Activated CD8-positive, alpha-beta T cell treated with anti-CD3 and anti-CD28 coated beads for 36 hours (primary cell): ENCODE measurements at regions of chr1 and their contacts with region 1.

Region 1: GRCh38 chr1:192808518-192809306 is at the start of gene RGS2:
- DNase-seq: peak; percentile 89
- ATAC-seq: peak; percentile 95
- H3K4me3 Mint-ChIP-seq: peak within 1 kb of the TSS; percentile 89
- H3K27ac Mint-ChIP-seq: peak within 1 kb of the TSS; percentile 93
- H3K4me1 Mint-ChIP-seq: peaks cover 29% of the 10 kb centered on the region
- H3K27me3 Mint-ChIP-seq: peaks cover 1% of the 10 kb centered on the region
- CTCF ChIP-seq: no peak
- total RNA-seq, gene RGS2: 5.7 to 6.3 TPM

Region 2: DNA sequence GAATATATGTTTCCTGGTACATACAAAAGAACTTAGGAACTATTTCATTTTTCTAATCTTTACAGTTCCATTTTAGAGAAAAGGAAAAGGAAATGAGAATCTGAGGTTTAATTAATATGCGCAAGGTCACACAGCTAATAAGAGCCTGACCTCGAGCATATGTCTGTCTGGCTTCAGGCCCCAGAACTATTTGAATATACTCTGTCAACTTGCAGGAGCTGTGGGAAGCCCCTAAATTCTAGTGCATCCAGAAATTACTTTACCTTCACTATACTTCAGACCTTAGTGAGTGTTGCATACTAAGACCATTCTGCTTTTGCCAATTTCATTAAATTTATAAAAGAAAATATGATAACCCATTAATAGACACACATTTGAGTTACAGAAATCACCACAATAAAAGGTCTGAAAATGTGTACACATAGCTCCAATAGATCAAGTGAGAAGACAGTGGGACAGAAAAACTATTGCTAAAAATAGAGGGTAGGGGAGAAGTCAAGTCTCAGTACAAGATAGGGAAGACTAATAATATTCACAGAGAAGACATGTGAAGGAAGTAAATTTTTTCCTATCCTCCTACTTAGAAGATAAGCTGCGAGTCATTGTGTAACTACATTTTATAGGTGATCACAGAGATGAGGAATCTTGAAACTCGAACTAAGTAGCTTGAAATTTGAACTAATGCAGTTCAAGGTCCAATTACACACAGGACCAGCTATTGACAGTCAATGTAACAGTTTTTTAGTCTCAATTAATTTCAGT is 168.9 kb before region 1 on chr1:
- CTCF ChIA-PET with region 1: no interaction called
- POLR2A ChIA-PET with region 1: no interaction called
- intact Hi-C with region 1: loop called (anchors 10 kb)
- DNase-seq: peak; percentile 4
- ATAC-seq: peak; percentile 85
- H3K4me3 Mint-ChIP-seq: no peak overlapping the region
- H3K27ac Mint-ChIP-seq: peak overlapping the region; percentile 61
- H3K4me1 Mint-ChIP-seq: peaks cover 8% of the 10 kb centered on the region
- H3K27me3 Mint-ChIP-seq: peaks cover 4% of the 10 kb centered on the region
- CTCF ChIP-seq: no peak

Region 3: DNA sequence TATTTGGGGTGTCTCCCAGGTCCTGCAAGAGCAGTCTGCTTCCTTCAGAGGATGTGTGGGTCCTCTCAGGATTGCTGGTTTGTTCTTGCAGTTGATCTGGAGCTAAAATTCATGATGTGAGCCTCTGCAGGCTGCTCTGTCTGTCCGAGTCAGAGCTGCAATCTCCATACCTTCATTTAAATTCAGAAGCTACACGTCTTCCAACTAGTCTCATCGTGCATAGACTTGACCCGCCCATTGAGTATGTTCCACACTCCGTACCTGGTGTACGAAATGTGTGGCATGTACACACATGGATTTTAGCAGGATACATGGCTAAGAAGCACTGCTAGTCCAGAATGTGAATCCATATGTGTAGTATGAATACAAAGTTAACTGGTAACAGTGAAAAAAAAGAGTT is 24.9 kb before region 1 on chr1:
- CTCF ChIA-PET with region 1: no interaction called
- POLR2A ChIA-PET with region 1: no interaction called
- intact Hi-C with region 1: no loop called
- DNase-seq: no peak
- ATAC-seq: no peak
- H3K4me3 Mint-ChIP-seq: no peak overlapping the region
- H3K27ac Mint-ChIP-seq: no peak overlapping the region
- H3K4me1 Mint-ChIP-seq: no peaks in the 10 kb centered on the region
- H3K27me3 Mint-ChIP-seq: peaks cover 19% of the 10 kb centered on the region
- CTCF ChIP-seq: no peak

Region 4: GRCh38 chr1:192797891-192798290 is 10.8 kb before region 1 on chr1:
- CTCF ChIA-PET with region 1: interaction called, 12 read pairs
- POLR2A ChIA-PET with region 1: interaction called, 3 read pairs
- intact Hi-C with region 1: no loop called
- DNase-seq: no peak
- ATAC-seq: no peak
- H3K4me3 Mint-ChIP-seq: no peak overlapping the region
- H3K27ac Mint-ChIP-seq: no peak overlapping the region
- H3K4me1 Mint-ChIP-seq: no peaks in the 10 kb centered on the region
- H3K27me3 Mint-ChIP-seq: no peaks in the 10 kb centered on the region
- CTCF ChIP-seq: no peak

Region 5: GRCh38 chr1:192831706-192832355 is 23.1 kb after region 1 on chr1:
- CTCF ChIA-PET with region 1: no interaction called
- POLR2A ChIA-PET with region 1: no interaction called
- intact Hi-C with region 1: no loop called
- DNase-seq: no peak
- ATAC-seq: no peak
- H3K4me3 Mint-ChIP-seq: no peak overlapping the region
- H3K27ac Mint-ChIP-seq: no peak overlapping the region
- H3K4me1 Mint-ChIP-seq: no peaks in the 10 kb centered on the region
- H3K27me3 Mint-ChIP-seq: peaks cover 11% of the 10 kb centered on the region
- CTCF ChIP-seq: no peak

Region 6: GRCh38 chr1:192844360-192844759 is 35.6 kb after region 1 on chr1:
- CTCF ChIA-PET with region 1: no interaction called
- POLR2A ChIA-PET with region 1: no interaction called
- intact Hi-C with region 1: no loop called
- DNase-seq: no peak
- ATAC-seq: no peak
- H3K4me3 Mint-ChIP-seq: no peak overlapping the region
- H3K27ac Mint-ChIP-seq: no peak overlapping the region
- H3K4me1 Mint-ChIP-seq: no peaks in the 10 kb centered on the region
- H3K27me3 Mint-ChIP-seq: peaks cover 4% of the 10 kb centered on the region
- CTCF ChIP-seq: no peak

Region 7: DNA sequence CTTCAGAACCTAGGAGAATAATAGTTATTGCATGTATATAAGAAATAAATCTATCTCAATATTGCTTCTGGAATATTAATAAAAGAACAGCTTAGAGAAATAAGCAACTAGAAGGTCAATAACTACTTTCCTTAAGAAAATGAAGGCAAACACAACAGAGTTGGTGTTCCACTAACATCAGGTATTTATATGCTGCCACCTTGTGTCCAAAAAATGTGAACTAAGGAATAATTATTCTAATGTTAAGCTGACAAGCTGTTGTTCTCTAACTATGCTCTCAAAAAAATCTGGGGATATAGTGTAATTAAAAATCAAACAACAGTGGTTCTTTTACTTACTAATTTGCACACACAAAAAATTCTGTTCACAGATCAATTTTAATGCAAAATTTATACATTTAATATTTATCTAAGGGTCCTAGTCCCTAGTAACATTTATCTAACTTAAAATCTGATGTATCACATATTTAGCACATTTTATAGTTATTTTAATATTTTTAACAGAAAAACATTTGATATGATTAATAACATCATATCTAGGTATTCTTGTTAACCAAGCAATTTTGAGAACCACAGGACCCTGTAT is 210.8 kb after region 1 on chr1:
- CTCF ChIA-PET with region 1: interaction called, 41 read pairs
- POLR2A ChIA-PET with region 1: no interaction called
- intact Hi-C with region 1: loop called (anchors 5 kb)
- DNase-seq: no peak
- ATAC-seq: no peak
- H3K4me3 Mint-ChIP-seq: no peak overlapping the region
- H3K27ac Mint-ChIP-seq: no peak overlapping the region
- H3K4me1 Mint-ChIP-seq: no peaks in the 10 kb centered on the region
- H3K27me3 Mint-ChIP-seq: no peaks in the 10 kb centered on the region
- CTCF ChIP-seq: peak; percentile 51